ENCODE measurements at regions of chr1 and their contacts with region 1.

Region 1: GRCh38 chr1:26986658-26987057 is 6.8 kb upstream of the TRNP1 start:
- DNase-seq: no peak
- H3K4me3 ChIP-seq: no peak overlapping the region
- H3K27ac ChIP-seq: no peak overlapping the region
- H3K4me1 ChIP-seq: peaks cover 16% of the 10 kb centered on the region
- H3K27me3 ChIP-seq: peaks cover 2 to 8% of the 10 kb centered on the region in 2 experiments
- CTCF ChIP-seq: no peak
- POLR2A ChIP-seq: no peak

Region 2: DNA sequence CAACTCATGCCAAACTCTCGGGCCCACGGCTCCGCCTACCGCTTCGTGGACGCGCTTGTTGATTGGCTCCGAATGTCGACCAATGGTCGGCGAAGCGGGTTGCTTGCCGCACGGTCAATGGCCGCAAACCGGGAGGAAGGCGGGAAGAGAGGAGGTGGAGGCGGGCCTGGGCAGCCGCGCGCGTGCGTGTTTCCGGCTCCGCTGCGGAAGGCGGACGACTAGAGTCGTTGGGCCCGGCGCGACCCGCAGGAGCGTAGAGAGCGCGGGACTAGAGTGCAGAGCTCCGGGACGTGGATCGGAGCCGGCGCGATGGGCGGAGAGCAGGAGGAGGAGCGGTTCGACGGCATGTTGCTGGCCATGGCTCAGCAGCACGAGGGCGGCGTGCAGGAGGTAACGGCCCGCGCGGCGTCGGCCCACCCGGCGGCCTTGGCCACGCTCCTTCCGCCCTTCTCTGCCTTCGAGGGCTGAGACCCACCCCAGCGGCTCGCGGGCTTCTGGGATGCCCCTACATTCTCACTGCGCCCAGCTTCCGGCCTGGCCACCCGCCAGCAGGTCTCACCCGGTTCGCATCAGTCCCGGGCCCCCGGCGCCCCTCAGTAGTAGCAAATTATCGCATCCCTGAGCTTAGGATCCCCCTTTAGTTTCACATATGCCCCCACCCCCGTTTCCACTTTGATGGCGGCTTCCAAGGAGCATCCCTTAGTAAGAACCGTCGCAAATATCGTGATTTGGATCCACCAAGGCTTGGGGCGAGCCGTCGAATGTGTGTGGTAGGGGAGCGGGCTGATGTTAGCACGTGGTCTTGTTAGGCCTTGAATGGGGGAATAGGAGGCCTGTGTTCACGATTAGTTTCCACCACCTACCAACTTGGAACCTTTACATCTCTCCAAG is 64.9 kb before region 1 on chr1 and contains the start of gene NUDC:
- CTCF ChIA-PET with region 1: no interaction called
- POLR2A ChIA-PET with region 1: no interaction called
- dilution Hi-C with region 1: no loop called
- intact Hi-C with region 1: no loop called
- DNase-seq: peak; percentile 98
- H3K4me3 ChIP-seq: peak within 1 kb of the TSS; percentile 49 to 100 (median 74)
- H3K27ac ChIP-seq: peak within 1 kb of the TSS; percentile 71
- H3K4me1 ChIP-seq: peaks cover 26% of the 10 kb centered on the region
- H3K27me3 ChIP-seq: no peaks in the 10 kb centered on the region
- CTCF ChIP-seq: no peak
- POLR2A ChIP-seq: peak; percentile 95
- total RNA-seq, gene NUDC: 95.0 and 102 TPM in 2 replicates

Region 3: DNA sequence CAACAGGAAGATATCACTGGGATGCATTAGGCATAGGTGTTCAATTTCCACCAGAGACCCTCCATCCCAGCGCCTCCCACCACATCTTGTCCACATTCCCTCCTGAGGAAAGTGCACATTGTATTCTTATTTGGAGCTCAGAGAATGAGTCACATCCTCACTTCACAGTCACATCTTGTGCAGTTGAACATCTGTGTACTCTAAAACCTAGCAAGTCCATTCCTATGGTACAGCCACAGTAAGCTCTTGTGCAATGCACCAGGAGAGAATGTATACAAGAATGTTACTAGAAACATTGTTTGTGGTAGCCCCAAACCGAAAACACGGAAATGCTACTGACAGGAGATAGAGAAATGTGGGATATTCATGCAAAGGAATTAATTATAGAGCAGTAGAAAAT is 24.8 kb before region 1 on chr1:
- CTCF ChIA-PET with region 1: interaction called, 12 read pairs
- POLR2A ChIA-PET with region 1: no interaction called
- dilution Hi-C with region 1: no loop called
- intact Hi-C with region 1: loop called (anchors 1 kb)
- DNase-seq: peak; percentile 70
- H3K4me3 ChIP-seq: no peak overlapping the region
- H3K27ac ChIP-seq: no peak overlapping the region
- H3K4me1 ChIP-seq: peaks cover 16% of the 10 kb centered on the region
- H3K27me3 ChIP-seq: peaks cover 22 to 24% of the 10 kb centered on the region in 2 experiments
- CTCF ChIP-seq: no peak
- POLR2A ChIP-seq: no peak

Region 4: GRCh38 chr1:26970810-26971209 is 15.8 kb before region 1 on chr1:
- CTCF ChIA-PET with region 1: interaction called, 12 read pairs
- POLR2A ChIA-PET with region 1: no interaction called
- dilution Hi-C with region 1: no loop called
- intact Hi-C with region 1: loop called (anchors 1 kb)
- DNase-seq: no peak
- H3K4me3 ChIP-seq: no peak overlapping the region
- H3K27ac ChIP-seq: no peak overlapping the region
- H3K4me1 ChIP-seq: no peaks in the 10 kb centered on the region
- H3K27me3 ChIP-seq: peaks cover 0 to 4% of the 10 kb centered on the region in 2 experiments
- CTCF ChIP-seq: no peak
- POLR2A ChIP-seq: no peak

Region 5: GRCh38 chr1:27253596-27253995 is 266.9 kb after region 1 on chr1:
- CTCF ChIA-PET with region 1: no interaction called
- POLR2A ChIA-PET with region 1: no interaction called
- dilution Hi-C with region 1: no loop called
- intact Hi-C with region 1: no loop called
- DNase-seq: no peak
- H3K4me3 ChIP-seq: no peak overlapping the region
- H3K27ac ChIP-seq: no peak overlapping the region
- H3K4me1 ChIP-seq: no peaks in the 10 kb centered on the region
- H3K27me3 ChIP-seq: no peaks in the 10 kb centered on the region
- CTCF ChIP-seq: no peak
- POLR2A ChIP-seq: no peak

Measured in endothelial cell of umbilical vein (primary cell).